OCI-LY7 (cell line): ENCODE measurements at regions of chr2 and their contacts with region 1.

Region 1: DNA sequence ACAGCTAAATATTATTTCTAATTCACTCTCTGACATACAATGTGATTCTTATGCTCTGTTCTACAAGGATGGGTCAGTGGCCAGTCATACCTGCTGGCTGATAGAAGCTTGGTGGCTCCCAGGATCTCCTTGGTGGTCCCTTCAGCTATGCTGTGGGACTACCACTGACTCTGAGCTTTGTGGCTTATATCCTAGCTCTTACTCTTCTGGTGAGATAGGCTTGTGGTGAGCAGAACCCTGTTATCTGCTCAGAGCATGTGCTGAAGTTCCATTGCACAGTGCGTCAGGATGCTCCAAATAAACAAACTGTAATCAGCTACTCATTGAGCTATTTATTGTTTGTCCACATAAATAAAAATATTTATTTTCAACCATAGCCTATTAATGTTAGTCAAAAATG is 51.7 kb downstream of the MFSD6 start:
- DNase-seq: no peak
- H3K4me3 ChIP-seq: no peak overlapping the region
- H3K27ac ChIP-seq: no peak overlapping the region
- H3K4me1 ChIP-seq: peaks cover 11% of the 10 kb centered on the region
- CTCF ChIP-seq: no peak

Region 2: DNA sequence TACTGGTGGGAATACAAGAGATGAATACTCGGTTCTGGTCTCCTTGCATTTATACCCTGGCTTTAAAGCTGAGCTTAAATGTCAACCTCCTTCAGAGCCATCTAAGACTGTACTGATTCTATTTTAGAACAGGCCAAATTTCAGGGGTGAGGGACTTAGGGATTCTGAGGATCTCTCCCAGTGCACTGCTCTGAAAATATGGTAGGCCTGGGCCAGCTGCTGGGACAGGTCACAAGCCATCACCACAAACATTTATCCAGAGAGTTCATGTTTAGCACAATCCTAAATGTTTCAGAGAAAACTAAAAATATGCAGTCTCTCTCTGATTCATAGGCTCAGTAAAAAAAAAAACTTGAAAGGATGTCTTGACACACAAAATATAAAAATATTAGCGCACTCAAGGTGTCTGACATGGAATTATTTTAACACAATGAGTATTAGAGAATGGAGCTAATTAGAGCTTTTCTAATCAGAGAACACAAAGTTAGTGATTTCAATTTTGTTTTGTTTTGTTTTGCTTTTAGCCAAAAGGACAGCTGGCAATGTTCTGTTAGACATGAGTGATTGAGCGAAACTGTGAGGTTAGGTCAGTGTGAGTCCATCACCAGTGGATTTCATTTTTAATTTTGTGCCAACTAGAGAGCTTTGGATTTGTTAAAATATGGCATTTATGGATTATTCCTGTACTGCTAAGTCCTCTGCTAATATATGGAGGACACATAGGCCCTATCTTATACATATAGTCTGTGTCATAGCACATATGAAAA is 12.9 kb before region 1 on chr2:
- CTCF ChIA-PET with region 1: no interaction called
- POLR2A ChIA-PET with region 1: interaction called, 14 read pairs
- intact Hi-C with region 1: no loop called
- DNase-seq: no peak
- H3K4me3 ChIP-seq: no peak overlapping the region
- H3K27ac ChIP-seq: no peak overlapping the region
- H3K4me1 ChIP-seq: peaks cover 6% of the 10 kb centered on the region
- CTCF ChIP-seq: no peak

Region 3: DNA sequence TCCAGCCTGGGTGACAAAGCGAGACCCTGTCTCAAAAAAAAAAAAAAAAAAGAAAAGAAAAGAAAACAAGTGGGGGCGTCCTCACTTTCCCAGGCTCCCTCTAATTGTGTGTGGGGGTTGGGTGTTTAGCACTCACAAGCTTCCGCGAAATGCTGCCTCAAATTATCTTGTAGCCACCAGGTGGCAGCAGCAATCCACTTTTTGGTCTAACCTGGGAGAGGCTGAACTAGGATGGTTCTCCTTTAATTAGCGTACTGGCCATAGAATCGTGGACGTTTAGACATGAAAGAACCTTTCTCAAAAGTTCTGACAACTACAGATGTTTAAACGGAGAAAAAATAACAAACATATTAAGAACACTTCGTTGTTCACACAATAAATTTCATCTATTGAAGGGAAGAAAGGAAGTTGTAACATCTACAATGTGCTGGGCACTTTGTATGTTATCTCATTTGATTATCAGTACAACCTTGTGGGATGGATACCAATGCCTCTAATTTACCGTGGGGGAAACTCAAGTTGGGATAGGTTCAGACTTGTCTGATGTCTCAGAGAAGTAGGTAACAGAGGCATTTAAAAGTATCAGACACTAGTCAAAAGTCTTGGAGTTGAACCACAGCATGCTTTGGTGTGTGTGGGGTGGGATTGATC is 1095.3 kb after region 1 on chr2:
- CTCF ChIA-PET with region 1: no interaction called
- POLR2A ChIA-PET with region 1: interaction called, 11 read pairs
- intact Hi-C with region 1: no loop called
- DNase-seq: peak; percentile 75
- H3K4me3 ChIP-seq: no peak overlapping the region
- H3K27ac ChIP-seq: no peak overlapping the region
- H3K4me1 ChIP-seq: no peaks in the 10 kb centered on the region
- CTCF ChIP-seq: peak; percentile 86